ENCODE measurements at regions of chr11 and their contacts with region 1.

Region 1: GRCh38 chr11:128630367-128631230 is 43.2 kb upstream of the ETS1 start:
- DNase-seq: peak; percentile 82 to 88
- H3K4me3 ChIP-seq: no peak overlapping the region
- H3K4me3 Mint-ChIP-seq: no peak overlapping the region
- H3K27ac Mint-ChIP-seq: no peak overlapping the region
- H3K4me1 ChIP-seq: no peaks in the 10 kb centered on the region
- H3K4me1 Mint-ChIP-seq: no peaks in the 10 kb centered on the region
- H3K27me3 ChIP-seq: peaks cover 1% of the 10 kb centered on the region; the same call in 1 of the 2 replicates
- H3K27me3 Mint-ChIP-seq: peaks cover 10% of the 10 kb centered on the region
- CTCF ChIP-seq: peak; percentile 96 to 97

Region 2: GRCh38 chr11:128157423-128158298 is 472.9 kb before region 1 on chr11:
- CTCF ChIA-PET with region 1: interaction called, 22 read pairs
- POLR2A ChIA-PET with region 1: no interaction called
- intact Hi-C with region 1: loop called (anchors 1 kb)
- DNase-seq: peak; percentile 65 to 80
- H3K4me3 ChIP-seq: no peak overlapping the region
- H3K4me3 Mint-ChIP-seq: peak overlapping the region; percentile 24
- H3K27ac Mint-ChIP-seq: no peak overlapping the region
- H3K4me1 ChIP-seq: no peaks in the 10 kb centered on the region
- H3K4me1 Mint-ChIP-seq: no peaks in the 10 kb centered on the region
- H3K27me3 ChIP-seq: peaks cover 2% of the 10 kb centered on the region; the same call in 1 of the 2 replicates
- H3K27me3 Mint-ChIP-seq: peaks cover 23% of the 10 kb centered on the region
- CTCF ChIP-seq: peak; percentile 86 to 99

Region 3: GRCh38 chr11:128448200-128448886 is 182.3 kb before region 1 on chr11:
- CTCF ChIA-PET with region 1: interaction called, 3 read pairs
- POLR2A ChIA-PET with region 1: no interaction called
- intact Hi-C with region 1: loop called (anchors 1 kb)
- DNase-seq: peak; percentile 88 to 95
- H3K4me3 ChIP-seq: no peak overlapping the region
- H3K4me3 Mint-ChIP-seq: peak overlapping the region; percentile 60
- H3K27ac Mint-ChIP-seq: peak overlapping the region; percentile 84
- H3K4me1 ChIP-seq: peaks cover 19% of the 10 kb centered on the region
- H3K4me1 Mint-ChIP-seq: peaks cover 14% of the 10 kb centered on the region
- H3K27me3 ChIP-seq: no peaks in the 10 kb centered on the region
- H3K27me3 Mint-ChIP-seq: no peaks in the 10 kb centered on the region
- CTCF ChIP-seq: peak in 1 of 2 experiments; percentile 59

Region 4: GRCh38 chr11:128552783-128553661 is 77.6 kb before region 1 on chr11:
- CTCF ChIA-PET with region 1: interaction called, 8 read pairs
- POLR2A ChIA-PET with region 1: no interaction called
- intact Hi-C with region 1: loop called (anchors 1 kb)
- DNase-seq: no peak
- H3K4me3 ChIP-seq: no peak overlapping the region
- H3K4me3 Mint-ChIP-seq: no peak overlapping the region
- H3K27ac Mint-ChIP-seq: no peak overlapping the region
- H3K4me1 ChIP-seq: peaks cover 3% of the 10 kb centered on the region; the same call in 1 of the 2 replicates
- H3K4me1 Mint-ChIP-seq: peaks cover 7% of the 10 kb centered on the region
- H3K27me3 ChIP-seq: no peaks in the 10 kb centered on the region; the same call in 1 of the 2 replicates
- H3K27me3 Mint-ChIP-seq: peaks cover 7% of the 10 kb centered on the region
- CTCF ChIP-seq: no peak

Region 5: DNA sequence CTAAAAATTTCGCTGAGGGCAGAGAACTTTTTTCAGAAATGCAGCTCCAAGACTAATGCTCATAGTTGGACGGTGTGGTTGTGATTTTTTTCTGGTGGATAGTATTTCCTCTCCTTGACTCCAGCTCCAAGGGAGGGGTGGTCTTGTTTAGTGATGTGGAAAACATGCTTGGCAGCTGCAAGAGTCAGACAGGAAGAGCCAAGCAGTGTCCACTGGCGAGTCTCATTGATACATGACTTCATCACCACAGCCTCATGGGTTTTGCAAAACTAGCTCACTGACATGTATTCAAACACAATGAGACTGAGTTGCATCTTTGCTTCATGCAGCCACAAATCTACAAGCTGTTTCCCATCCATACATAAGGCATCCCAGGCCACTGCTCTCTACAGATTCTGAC is 243.8 kb after region 1 on chr11:
- CTCF ChIA-PET with region 1: no interaction called
- POLR2A ChIA-PET with region 1: no interaction called
- intact Hi-C with region 1: no loop called
- DNase-seq: peak in 1 of 2 experiments; percentile 10
- H3K4me3 ChIP-seq: no peak overlapping the region
- H3K4me3 Mint-ChIP-seq: no peak overlapping the region
- H3K27ac Mint-ChIP-seq: no peak overlapping the region
- H3K4me1 ChIP-seq: no peaks in the 10 kb centered on the region
- H3K4me1 Mint-ChIP-seq: no peaks in the 10 kb centered on the region
- H3K27me3 ChIP-seq: peaks cover 8% of the 10 kb centered on the region
- H3K27me3 Mint-ChIP-seq: peaks cover 23% of the 10 kb centered on the region
- CTCF ChIP-seq: no peak

Measured in Caco-2 (cell line).